ENCODE measurements at regions of chr16 and their contacts with region 1.

Region 1: GRCh38 chr16:2155091-2156021 is at the start of gene TRAF7:
- DNase-seq: peak; percentile 100

Region 2: GRCh38 chr16:2213817-2214720 is 58.7 kb after region 1 on chr16:
- in situ Hi-C with region 1: loop called (anchors 10 kb)
- DNase-seq: no peak

Region 3: DNA sequence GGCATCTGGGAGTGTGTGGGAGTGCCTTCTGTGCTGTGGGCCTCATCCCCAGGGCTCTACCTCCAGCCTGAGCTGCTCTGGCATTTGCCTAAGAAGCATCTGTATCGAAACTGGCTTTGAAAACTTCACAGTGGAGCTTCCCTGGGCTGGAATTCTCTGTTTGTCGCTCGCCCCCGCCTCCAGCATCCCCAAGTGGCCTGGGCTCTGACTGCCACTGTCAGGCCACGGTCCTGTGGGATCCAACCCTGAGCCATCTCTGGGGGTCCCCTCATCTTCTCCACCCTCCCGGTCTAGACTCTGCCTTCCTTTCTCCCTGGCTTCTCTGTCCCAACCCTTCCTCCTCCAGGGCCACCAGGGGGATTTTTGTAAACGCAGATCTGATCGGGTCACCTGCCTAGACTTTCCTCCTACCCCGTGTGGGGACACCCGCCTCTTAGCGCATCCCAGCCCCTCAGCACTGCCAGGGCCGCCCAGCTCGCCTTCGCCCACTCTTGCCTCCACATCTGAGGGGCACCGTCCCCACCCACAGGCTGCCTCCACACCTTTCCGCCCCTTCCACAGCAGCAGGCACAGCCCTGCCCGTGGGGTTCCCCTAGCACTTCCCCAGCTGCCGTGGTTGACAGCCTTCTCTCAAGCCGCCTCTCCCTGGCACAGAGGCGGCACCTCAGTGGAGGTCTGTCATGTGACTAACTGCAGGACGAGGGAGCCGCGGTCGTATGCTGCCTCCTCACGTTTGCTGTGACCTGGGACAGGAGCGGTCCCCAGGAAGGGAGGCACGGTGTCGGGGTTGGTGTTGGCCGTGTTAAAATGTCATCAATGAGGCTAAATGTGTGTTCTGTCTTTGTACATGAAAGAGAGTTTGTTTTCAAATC is 331.5 kb after region 1 on chr16:
- in situ Hi-C with region 1: no loop called
- DNase-seq: peak; percentile 48

Measured in KBM-7 (cell line).